ENCODE measurements at regions of chr6 and their contacts with region 1.

Region 1: GRCh38 chr6:159693128-159693893 is at the start of gene SOD2:
- DNase-seq: peak; percentile 87
- H3K4me3 ChIP-seq: peak within 1 kb of the TSS; percentile 97
- H3K27ac ChIP-seq: peak within 1 kb of the TSS; percentile 99
- H3K4me1 ChIP-seq: no peaks in the 10 kb centered on the region
- H3K27me3 ChIP-seq: no peaks in the 10 kb centered on the region
- CTCF ChIP-seq: no peak
- total RNA-seq, gene SOD2: 199 to 365 TPM

Region 2: DNA sequence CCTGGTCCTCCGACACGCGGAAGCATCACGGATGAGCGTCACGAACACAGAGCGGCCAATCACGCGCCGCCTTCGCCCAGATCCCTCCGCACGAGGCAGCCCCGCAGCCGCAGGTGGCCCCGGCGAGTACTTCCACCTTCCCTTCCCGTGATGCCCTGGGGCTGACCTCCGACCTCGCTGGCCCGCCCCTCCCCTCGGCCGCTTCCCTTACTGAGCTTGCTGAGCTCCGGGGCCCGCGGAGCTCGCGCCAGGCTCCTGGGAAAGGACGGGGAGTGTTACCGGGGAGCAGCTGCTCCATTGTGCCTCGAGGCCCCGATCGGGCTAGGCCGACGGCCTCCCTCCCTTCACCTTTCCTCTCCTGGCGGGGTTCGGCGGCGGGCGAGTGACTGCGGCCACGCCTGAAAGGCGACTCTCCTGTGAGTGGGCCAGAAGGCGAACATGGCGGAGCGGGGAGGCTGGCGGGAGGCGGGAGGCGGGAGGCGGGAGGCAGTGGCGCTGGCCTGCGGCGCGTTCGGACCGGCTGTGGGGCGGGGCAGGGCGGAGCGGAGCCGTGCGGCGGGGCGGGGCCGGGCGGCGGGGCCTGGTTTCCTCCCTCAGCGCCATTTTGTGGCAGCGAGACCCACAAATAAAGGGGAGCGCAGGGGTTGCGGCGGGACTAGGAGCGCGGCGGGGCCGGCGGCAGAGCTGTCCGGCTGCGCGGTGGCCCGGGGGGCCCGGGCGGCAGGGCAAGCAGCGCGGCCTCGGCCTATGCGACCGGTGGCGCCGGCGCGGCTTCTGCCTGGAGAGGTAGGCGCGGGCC is 33.8 kb after region 1 on chr6 and contains the start of gene WTAP:
- intact Hi-C with region 1: loop called (anchors 5 kb)
- DNase-seq: peak; percentile 97
- H3K4me3 ChIP-seq: peak within 1 kb of the TSS; percentile 86
- H3K27ac ChIP-seq: peak within 1 kb of the TSS; percentile 98
- H3K4me1 ChIP-seq: peaks cover 4% of the 10 kb centered on the region
- H3K27me3 ChIP-seq: no peaks in the 10 kb centered on the region
- CTCF ChIP-seq: no peak
- total RNA-seq, gene WTAP: 73.7 to 84.1 TPM

Region 3: GRCh38 chr6:159789377-159790148 is 96.3 kb after region 1 on chr6 and contains the start of gene TCP1:
- intact Hi-C with region 1: loop called (anchors 5 kb)
- DNase-seq: peak; percentile 100
- H3K4me3 ChIP-seq: peak within 1 kb of the TSS; percentile 85
- H3K27ac ChIP-seq: peak within 1 kb of the TSS; percentile 95
- H3K4me1 ChIP-seq: peaks cover 19% of the 10 kb centered on the region
- H3K27me3 ChIP-seq: no peaks in the 10 kb centered on the region
- CTCF ChIP-seq: no peak
- total RNA-seq, gene TCP1: 163 to 294 TPM

Region 4: GRCh38 chr6:159899994-159900745 is 206.9 kb after region 1 on chr6:
- intact Hi-C with region 1: no loop called
- DNase-seq: no peak
- H3K4me3 ChIP-seq: no peak overlapping the region
- H3K27ac ChIP-seq: no peak overlapping the region
- H3K4me1 ChIP-seq: no peaks in the 10 kb centered on the region
- H3K27me3 ChIP-seq: no peaks in the 10 kb centered on the region
- CTCF ChIP-seq: no peak

Region 5: DNA sequence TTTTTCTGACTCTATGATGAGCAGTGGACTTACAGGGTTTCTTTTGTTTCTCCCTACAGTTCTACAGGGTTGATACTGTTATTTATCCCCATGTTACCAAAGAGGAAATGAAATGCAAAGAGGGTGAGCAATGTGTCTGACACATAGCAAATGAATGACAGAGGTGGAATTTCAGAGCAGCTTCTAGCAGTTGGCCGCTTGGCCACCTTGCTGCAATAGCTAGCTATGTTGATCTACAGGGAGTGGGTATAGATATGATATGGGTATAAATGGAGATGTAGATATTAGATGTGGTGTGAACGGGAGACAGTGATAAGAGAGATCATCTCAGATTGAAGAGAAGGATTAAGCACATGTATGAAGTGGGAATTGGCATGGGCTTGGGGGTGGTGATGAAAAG is 644.0 kb after region 1 on chr6:
- intact Hi-C with region 1: no loop called
- DNase-seq: no peak
- H3K4me3 ChIP-seq: no peak overlapping the region
- H3K27ac ChIP-seq: no peak overlapping the region
- H3K4me1 ChIP-seq: no peaks in the 10 kb centered on the region
- H3K27me3 ChIP-seq: no peaks in the 10 kb centered on the region
- CTCF ChIP-seq: no peak

Measured in colonic mucosa (tissue), 4 donors.